Adrenal gland (tissue), 19 donors: ENCODE measurements at regions of chr19 and their contacts with region 1.

Region 1: GRCh38 chr19:3429581-3430080 is 50.7 kb downstream of the SMIM24 start:
- DNase-seq: peak; percentile 88 to 97 (median 95)
- H3K4me3 ChIP-seq: no peak overlapping the region
- H3K27ac ChIP-seq: peak overlapping the region; percentile 59 to 94 (median 73)
- H3K4me1 ChIP-seq: peaks cover 9 to 71% of the 10 kb centered on the region in 2 donors
- H3K27me3 ChIP-seq: no peaks in the 10 kb centered on the region
- CTCF ChIP-seq: peak; percentile 97 to 99 (median 98)
- POLR2A ChIP-seq: no peak

Region 2: GRCh38 chr19:3243819-3244700 is 185.6 kb before region 1 on chr19:
- intact Hi-C with region 1: no loop called
- DNase-seq: peak in 5 of 7 donors; percentile 35 to 55 (median 48)
- H3K4me3 ChIP-seq: no peak overlapping the region
- H3K27ac ChIP-seq: no peak overlapping the region
- H3K4me1 ChIP-seq: no peaks in the 10 kb centered on the region
- H3K27me3 ChIP-seq: no peaks in the 10 kb centered on the region
- CTCF ChIP-seq: no peak
- POLR2A ChIP-seq: no peak

Region 3: DNA sequence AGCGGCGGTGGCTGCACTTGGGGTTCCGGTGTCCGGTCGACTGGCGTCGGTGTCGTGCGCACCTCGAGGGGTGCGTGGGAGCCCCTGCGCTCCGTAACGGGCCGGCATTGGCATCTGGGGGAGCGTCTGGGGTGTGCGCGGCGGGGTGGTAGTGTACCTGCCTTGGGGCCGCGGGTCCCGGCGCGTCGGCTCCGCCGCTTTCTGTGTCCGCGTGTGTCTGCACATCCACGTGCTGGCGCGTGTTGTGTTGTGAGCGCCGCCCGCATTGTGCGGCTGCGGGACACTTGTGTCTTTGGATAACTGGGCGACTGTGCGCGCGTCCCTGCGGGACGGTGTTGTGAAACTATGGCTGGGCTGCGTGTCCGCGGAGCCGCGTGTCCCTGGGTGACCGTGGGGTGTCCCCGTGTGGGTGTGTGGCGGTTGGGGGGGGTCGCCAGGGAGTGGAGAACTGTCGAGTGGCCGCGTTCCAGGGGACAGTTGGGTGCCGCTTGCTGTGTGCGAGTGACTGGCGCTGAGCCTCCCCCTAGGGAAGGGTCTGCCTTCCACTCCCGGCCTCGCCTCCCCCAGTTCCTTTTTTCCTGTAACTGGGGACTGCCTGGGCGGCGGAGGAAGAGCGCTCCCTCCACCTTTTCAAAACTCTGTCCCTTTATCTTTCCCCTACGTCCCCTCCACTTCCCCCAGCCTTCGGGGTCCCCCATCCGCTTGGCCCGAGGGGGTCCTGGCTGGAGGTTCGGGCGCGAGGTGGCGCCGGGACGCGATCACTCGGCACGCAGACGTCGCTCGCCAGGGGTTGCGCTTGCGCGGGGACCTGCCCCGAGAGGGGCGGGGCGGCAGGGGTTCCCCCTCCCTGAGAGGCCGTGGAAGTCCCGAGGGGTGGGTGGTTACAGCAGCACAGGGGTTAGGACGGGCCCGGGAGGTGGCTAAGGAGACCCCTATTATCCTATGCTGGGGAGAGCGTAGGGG is 68.9 kb before region 1 on chr19:
- intact Hi-C with region 1: loop called in 1 of 2 experiments (anchors 5 kb)
- DNase-seq: peak; percentile 66 to 84 (median 76)
- H3K4me3 ChIP-seq: peak overlapping the region in 3 of 4 donors; percentile 53 to 99 (median 65)
- H3K27ac ChIP-seq: peak overlapping the region; percentile 50 to 99 (median 87)
- H3K4me1 ChIP-seq: peaks cover 28 to 44% of the 10 kb centered on the region in 2 donors
- H3K27me3 ChIP-seq: no peaks in the 10 kb centered on the region
- CTCF ChIP-seq: peak in 2 of 6 experiments; percentile 6 to 13
- POLR2A ChIP-seq: peak; percentile 11 to 59